ENCODE measurements at regions of chr10 and their contacts with region 1.

Region 1: DNA sequence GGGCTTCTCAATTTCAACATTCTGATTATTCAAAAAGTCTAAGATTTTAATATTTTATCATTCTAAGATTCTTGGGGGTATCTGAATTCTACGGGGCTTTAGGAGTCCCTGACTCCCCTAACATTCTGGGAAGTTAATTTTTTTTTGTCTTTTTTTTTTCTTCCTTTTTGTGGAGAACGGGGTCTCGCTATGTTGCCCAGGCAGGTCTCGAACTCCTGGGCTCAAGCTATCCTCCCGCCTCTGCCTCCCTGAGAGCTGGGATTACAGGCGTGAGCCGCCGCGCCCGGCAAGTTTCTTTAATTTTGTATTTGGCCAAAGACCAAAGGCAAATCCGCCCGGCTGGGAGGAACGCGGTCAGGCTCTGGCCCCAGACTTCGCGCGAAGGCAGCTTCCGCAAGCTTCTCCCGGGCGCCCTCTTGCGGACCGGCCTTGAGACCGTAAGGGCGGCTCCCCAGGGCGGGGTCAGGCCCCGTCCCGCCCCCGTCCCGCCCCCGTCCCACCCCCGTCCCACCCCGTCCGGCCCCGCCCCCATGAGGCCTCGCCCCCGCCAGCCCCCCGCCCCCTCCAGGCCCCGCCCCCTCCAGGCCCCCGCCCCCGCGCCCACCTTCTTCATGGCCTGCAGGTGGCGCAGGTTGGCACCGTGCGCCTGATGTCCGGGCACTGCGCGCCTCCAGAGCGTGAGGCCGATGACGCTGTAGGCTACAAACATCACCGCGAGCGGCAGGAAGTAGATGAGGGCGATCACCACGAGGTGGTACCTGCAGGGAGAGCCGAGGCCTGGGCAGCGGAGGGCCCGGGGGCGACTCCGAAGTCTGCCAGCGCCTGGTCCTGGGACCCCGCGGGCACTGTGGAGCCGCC is 8.2 kb downstream of the TACR2 start:
- DNase-seq: peak; percentile 96 to 97
- ATAC-seq: peak; percentile 91 to 93
- H3K4me3 ChIP-seq: peak overlapping the region; percentile 28
- H3K27ac ChIP-seq: peak overlapping the region; percentile 85 to 92
- H3K4me1 ChIP-seq: peaks cover 14% of the 10 kb centered on the region
- CTCF ChIP-seq: peak; percentile 59
- EP300 ChIP-seq: no peak
- POLR2A ChIP-seq: peak; percentile 51
- RAD21 ChIP-seq: peak; percentile 34 to 79

Region 2: DNA sequence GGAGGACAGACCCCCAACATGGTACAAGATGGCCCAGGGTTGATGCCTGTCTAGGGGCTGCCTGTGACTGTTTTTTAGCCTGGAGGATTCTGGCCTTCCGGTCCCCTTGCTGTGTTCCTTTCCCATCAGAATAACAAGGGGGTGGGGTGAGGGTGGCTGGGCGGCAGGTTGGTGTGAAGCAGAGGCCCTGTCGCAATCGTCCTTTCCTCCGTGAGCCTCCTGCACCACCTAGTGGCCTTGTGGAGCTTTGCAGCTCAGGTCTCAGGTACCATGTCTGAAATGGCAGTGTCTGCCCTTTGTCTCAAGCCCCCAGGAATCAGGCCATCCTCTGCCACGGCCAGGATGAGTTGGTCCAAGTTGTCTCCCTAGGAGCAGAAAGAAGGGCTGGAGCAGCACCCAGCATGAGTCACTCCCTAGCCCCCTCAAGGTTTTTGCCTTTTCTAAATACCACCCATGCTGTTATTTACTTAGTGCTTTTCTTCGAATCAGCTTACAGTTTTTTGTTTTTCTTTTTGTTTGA is 16.0 kb before region 1 on chr10:
- CTCF ChIA-PET with region 1: interaction called, 77 read pairs
- POLR2A ChIA-PET with region 1: interaction called, 4 read pairs
- DNase-seq: peak; percentile 85 to 87
- ATAC-seq: peak; percentile 86 to 94
- H3K4me3 ChIP-seq: no peak overlapping the region
- H3K27ac ChIP-seq: peak overlapping the region; percentile 48 to 72; a peak in 4 of 6 replicates
- H3K4me1 ChIP-seq: peaks cover 21% of the 10 kb centered on the region
- CTCF ChIP-seq: peak; percentile 94
- EP300 ChIP-seq: no peak
- POLR2A ChIP-seq: no peak
- RAD21 ChIP-seq: peak; percentile 99

Region 3: DNA sequence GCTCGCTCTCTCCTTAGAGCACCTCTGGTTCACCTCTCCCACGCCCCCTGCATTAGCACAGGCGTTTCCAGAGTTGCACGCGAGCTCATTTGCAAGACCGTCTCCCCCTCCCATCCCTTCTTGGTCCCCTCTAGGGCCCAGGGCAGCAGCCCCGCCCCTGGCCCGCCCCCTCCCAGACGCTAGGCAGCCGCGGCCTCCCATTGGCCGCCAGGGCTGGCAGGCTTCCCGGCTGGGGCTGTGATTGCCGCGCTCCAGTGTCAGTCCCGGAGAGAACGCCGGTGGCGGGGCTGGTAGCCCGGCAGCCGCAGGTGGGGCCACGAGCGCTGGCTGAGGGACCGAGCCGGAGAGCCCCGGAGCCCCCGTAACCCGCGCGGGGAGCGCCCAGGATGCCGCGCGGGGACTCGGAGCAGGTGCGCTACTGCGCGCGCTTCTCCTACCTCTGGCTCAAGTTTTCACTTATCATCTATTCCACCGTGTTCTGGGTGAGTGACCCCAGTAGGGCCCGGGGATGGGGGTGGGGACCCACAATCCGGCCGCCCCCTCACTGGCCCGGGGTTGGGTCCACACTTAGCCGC is 42.7 kb after region 1 on chr10 and contains the start of gene TSPAN15:
- CTCF ChIA-PET with region 1: interaction called, 11 read pairs
- POLR2A ChIA-PET with region 1: interaction called, 8 read pairs
- DNase-seq: peak; percentile 78 to 94
- ATAC-seq: peak; percentile 84 to 85
- H3K4me3 ChIP-seq: peak within 1 kb of the TSS; percentile 78
- H3K27ac ChIP-seq: peak within 1 kb of the TSS; percentile 92 to 94
- H3K4me1 ChIP-seq: peaks cover 74% of the 10 kb centered on the region
- CTCF ChIP-seq: no peak
- EP300 ChIP-seq: no peak
- POLR2A ChIP-seq: peak; percentile 39
- RAD21 ChIP-seq: no peak
- polyA plus RNA-seq, gene TSPAN15: 89.0 and 89.6 TPM in 2 replicates

Region 4: GRCh38 chr10:69464801-69465401 is 56.4 kb after region 1 on chr10:
- CTCF ChIA-PET with region 1: no interaction called
- POLR2A ChIA-PET with region 1: no interaction called
- DNase-seq: no peak
- ATAC-seq: peak; percentile 49 to 74; a peak in 5 of 6 replicates
- H3K4me3 ChIP-seq: no peak overlapping the region
- H3K27ac ChIP-seq: peak overlapping the region; percentile 52 to 68
- H3K4me1 ChIP-seq: peaks cover 64% of the 10 kb centered on the region
- CTCF ChIP-seq: no peak
- EP300 ChIP-seq: no peak
- POLR2A ChIP-seq: no peak
- RAD21 ChIP-seq: no peak

Region 5: GRCh38 chr10:69498711-69499476 is 90.3 kb after region 1 on chr10:
- CTCF ChIA-PET with region 1: interaction called, 80 read pairs
- POLR2A ChIA-PET with region 1: no interaction called
- DNase-seq: no peak
- ATAC-seq: no peak
- H3K4me3 ChIP-seq: no peak overlapping the region
- H3K27ac ChIP-seq: peak overlapping the region in 1 of 2 experiments; percentile 21; a peak in 1 of 6 replicates
- H3K4me1 ChIP-seq: peaks cover 8% of the 10 kb centered on the region
- CTCF ChIP-seq: no peak
- EP300 ChIP-seq: no peak
- POLR2A ChIP-seq: no peak
- RAD21 ChIP-seq: no peak

Region 6: GRCh38 chr10:69515699-69516259 is 107.2 kb after region 1 on chr10:
- CTCF ChIA-PET with region 1: interaction called, 36 read pairs
- POLR2A ChIA-PET with region 1: no interaction called
- DNase-seq: peak; percentile 78 to 87
- ATAC-seq: peak; percentile 96 to 97
- H3K4me3 ChIP-seq: no peak overlapping the region
- H3K27ac ChIP-seq: no peak overlapping the region
- H3K4me1 ChIP-seq: no peaks in the 10 kb centered on the region
- CTCF ChIP-seq: peak; percentile 82
- EP300 ChIP-seq: no peak
- POLR2A ChIP-seq: no peak
- RAD21 ChIP-seq: peak; percentile 88 to 90

Region 7: DNA sequence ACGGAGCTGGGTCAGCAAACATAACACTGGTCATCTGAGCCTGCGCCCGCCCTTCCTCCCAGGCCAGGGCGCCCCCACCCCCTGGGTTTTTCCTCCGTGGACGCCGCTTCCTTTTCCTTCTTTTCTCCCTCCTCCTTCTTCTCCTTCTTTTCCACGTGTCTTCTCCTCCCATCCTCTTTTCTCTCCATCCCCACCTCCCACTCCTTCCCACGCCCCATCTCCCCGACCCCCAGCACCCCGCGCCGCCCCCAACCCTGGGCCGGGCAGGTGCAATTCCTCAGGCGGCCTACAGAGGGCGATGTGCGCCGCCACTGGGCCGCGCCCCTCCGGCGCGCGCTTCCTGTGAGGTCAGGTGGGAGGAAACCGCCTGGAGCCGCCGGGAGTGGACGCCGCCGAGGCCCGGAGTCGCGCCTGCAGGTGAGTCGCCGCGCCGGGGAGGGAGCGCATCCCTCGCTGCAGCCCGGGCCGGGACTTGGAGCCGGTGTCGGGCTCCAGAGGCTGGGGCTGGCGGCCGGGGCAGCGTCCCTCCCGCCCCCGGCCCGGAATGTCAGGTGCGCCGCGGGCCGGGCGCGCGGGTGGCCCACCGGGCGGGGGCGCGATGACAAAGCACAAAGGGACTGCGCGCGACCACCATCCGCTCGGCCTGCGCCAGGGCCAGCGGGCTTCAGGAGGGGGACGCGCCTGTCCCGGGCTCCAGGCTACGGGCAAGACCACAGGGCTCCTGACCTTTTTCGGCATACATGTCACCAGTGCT is 221.5 kb after region 1 on chr10 and contains the start of gene FAM241B:
- CTCF ChIA-PET with region 1: interaction called, 107 read pairs
- POLR2A ChIA-PET with region 1: no interaction called
- DNase-seq: peak; percentile 70 to 82
- ATAC-seq: peak; percentile 86 to 94
- H3K4me3 ChIP-seq: peak within 1 kb of the TSS; percentile 77
- H3K27ac ChIP-seq: peak within 1 kb of the TSS; percentile 80 to 98
- H3K4me1 ChIP-seq: peaks cover 7% of the 10 kb centered on the region
- CTCF ChIP-seq: peak; percentile 89
- EP300 ChIP-seq: no peak
- POLR2A ChIP-seq: peak; percentile 43
- RAD21 ChIP-seq: peak in 1 of 2 experiments; percentile 51; a peak in 2 of 5 replicates
- polyA plus RNA-seq, gene FAM241B: 17.8 and 22.8 TPM in 2 replicates

Measured in A549 (cell line).